ENCODE measurements at regions of chr5 and their contacts with region 1.

Region 1: GRCh38 chr5:154072414-154073171 is 33.8 kb downstream of the MFAP3 start:
- DNase-seq: peak; percentile 84
- H3K4me3 ChIP-seq: no peak overlapping the region
- H3K27ac ChIP-seq: no peak overlapping the region
- H3K4me1 ChIP-seq: peaks cover 0 to 5% (median under 1%) of the 10 kb centered on the region in 4 donors
- H3K27me3 ChIP-seq: no peaks in the 10 kb centered on the region
- CTCF ChIP-seq: peak; percentile 92 to 94

Region 2: GRCh38 chr5:153358315-153358976 is 714.1 kb before region 1 on chr5:
- intact Hi-C with region 1: no loop called
- DNase-seq: no peak
- H3K4me3 ChIP-seq: no peak overlapping the region
- H3K27ac ChIP-seq: no peak overlapping the region
- H3K4me1 ChIP-seq: peaks cover 0 to 6% (median 3%) of the 10 kb centered on the region in 4 donors
- H3K27me3 ChIP-seq: no peaks in the 10 kb centered on the region
- CTCF ChIP-seq: no peak

Region 3: GRCh38 chr5:154179846-154180710 is 107.5 kb after region 1 on chr5:
- intact Hi-C with region 1: loop called (anchors 5 kb)
- DNase-seq: no peak
- H3K4me3 ChIP-seq: no peak overlapping the region
- H3K27ac ChIP-seq: no peak overlapping the region
- H3K4me1 ChIP-seq: peaks cover 0 to 11% (median 5%) of the 10 kb centered on the region in 4 donors
- H3K27me3 ChIP-seq: no peaks in the 10 kb centered on the region
- CTCF ChIP-seq: peak; percentile 72 to 77

Region 4: GRCh38 chr5:154405078-154405792 is 332.6 kb after region 1 on chr5:
- intact Hi-C with region 1: loop called (anchors 2 kb)
- DNase-seq: peak; percentile 76 to 84
- H3K4me3 ChIP-seq: peak overlapping the region; percentile 35 to 52
- H3K27ac ChIP-seq: peak overlapping the region in 1 of 2 donors; percentile 34
- H3K4me1 ChIP-seq: peaks cover 0 to 11% (median 4%) of the 10 kb centered on the region in 4 donors
- H3K27me3 ChIP-seq: no peaks in the 10 kb centered on the region
- CTCF ChIP-seq: peak; percentile 90 to 91